ENCODE measurements at regions of chr9 and their contacts with region 1.

Region 1: DNA sequence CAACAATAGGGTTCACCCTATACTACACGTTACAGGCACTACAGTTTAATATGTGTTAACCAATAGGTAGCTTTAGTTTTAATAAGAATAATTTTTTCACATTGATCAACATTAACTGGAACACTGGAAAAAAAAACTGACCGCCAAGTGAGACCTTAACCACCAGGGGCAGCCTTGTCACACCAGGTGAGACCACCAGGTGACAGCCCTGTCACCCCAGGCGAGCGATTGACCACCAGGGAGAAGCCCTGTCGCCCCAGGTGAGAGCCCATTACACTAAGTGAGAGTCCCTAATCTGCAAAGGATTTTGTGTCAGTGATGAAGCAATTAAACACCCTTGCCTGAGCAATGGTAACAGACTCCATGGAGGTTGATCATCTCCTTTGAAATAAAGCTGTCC is 75.4 kb upstream of the SYK start:
- DNase-seq: no peak

Region 2: GRCh38 chr9:90198956-90199355 is 527.3 kb before region 1 on chr9:
- intact Hi-C with region 1: loop called (anchors 10 kb)
- DNase-seq: no peak

Region 3: GRCh38 chr9:90830977-90831376 is 104.8 kb after region 1 on chr9:
- intact Hi-C with region 1: no loop called
- DNase-seq: peak; percentile 29

Measured in cardiac septum (tissue), 1 donor.